Sciatic nerve (tissue), 2 donors: ENCODE measurements at regions of chr3 and their contacts with region 1.

Region 1: DNA sequence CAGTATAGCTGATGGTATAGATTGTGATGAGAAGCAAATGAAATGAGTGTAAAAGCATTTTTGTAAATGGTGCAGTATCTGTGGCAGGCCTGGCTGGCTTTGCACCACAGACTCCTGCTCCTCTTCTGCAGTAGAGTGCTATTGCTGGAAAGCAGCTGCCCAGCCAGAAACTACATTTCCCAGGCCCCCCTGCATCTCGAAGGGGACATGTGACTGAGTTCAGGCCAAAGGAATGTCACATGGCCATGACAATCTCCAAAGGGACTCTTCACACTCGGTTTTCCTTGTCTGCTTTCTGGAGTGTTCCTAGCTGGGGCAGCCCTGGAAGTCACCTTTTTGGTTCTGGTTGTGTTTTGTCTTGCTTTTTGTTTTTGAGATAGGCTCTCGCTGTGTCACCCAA is 277.1 kb downstream of the SUCLG2 start:
- DNase-seq: no peak
- ATAC-seq: no peak

Region 2: DNA sequence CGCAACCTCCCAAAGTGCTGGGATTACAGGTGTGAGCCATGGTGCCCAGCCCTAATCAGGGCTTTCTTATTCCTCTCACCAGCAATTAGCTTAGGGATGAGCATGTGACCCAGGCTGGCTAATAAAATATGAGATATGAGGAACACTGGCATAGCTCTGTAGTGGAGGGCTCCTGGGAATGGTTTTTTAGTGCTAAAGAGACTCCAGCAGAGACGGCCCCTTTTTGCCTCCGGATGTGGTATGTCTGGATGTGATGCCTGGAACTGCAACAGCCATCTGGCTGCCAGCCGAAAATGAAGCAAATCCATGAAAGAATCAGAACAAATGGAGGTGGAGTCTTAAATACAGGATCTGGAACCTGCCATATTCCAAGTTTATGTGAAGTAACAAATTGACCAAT is 1269.4 kb before region 1 on chr3:
- intact Hi-C with region 1: loop called (anchors 10 kb)
- DNase-seq: no peak
- ATAC-seq: no peak

Region 3: GRCh38 chr3:67245545-67245944 is 131.8 kb before region 1 on chr3:
- intact Hi-C with region 1: no loop called
- DNase-seq: no peak
- ATAC-seq: peak; percentile 22

Region 4: GRCh38 chr3:67357610-67358458 is 19.5 kb before region 1 on chr3:
- intact Hi-C with region 1: no loop called
- DNase-seq: no peak
- ATAC-seq: no peak

Region 5: DNA sequence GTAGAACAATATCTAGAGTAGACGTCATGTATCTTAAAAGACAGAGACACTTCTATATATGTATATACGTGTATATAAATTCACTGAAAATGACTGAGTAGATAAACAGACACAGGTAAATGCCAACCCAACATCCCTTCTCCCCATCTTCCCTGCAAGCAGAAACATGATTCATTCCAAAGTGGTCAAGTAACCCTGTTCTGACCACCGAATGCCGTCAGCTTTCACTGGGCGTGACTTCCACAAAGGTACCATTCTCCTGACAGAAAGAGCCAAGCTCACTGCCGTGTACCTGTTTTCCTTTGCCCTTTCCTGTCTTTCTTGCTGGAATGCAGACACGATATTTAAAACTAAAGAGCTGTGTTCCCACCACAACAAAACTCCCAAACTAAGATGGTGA is 1478.3 kb after region 1 on chr3:
- intact Hi-C with region 1: loop called (anchors 10 kb)
- DNase-seq: no peak
- ATAC-seq: no peak